Transverse colon (tissue), 4 donors: ENCODE measurements at regions of chr1 and their contacts with region 1.

Region 1: DNA sequence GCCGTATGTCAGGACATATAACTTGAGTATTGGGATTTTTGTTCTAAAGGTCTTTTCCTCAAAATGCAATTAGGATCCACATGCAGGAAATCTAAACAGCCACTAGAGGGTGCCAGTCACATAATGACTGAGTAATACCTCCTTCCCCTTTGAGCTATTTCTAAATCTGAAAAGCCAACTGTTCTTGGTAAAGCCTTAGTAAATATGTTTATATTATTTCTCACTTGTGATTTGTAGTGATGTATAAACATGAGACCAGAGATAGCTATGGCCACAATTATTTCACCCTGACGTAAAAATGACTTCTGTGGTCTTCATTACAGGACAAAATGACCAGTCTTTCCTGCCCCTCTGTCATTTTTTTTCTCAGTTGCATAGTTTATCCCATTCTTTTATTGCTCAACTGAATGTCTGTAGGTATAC is 41.0 kb upstream of the DR1 start:
- DNase-seq: peak; percentile 49
- H3K4me3 ChIP-seq: no peak overlapping the region
- H3K27ac ChIP-seq: no peak overlapping the region
- H3K4me1 ChIP-seq: no peaks in the 10 kb centered on the region
- H3K27me3 ChIP-seq: no peaks in the 10 kb centered on the region
- CTCF ChIP-seq: peak; percentile 81 to 95 (median 84)
- EP300 ChIP-seq: no peak
- POLR2A ChIP-seq: no peak

Region 2: GRCh38 chr1:93196591-93196990 is 108.1 kb before region 1 on chr1:
- in situ Hi-C with region 1: no loop called
- intact Hi-C with region 1: no loop called
- DNase-seq: no peak
- H3K4me3 ChIP-seq: no peak overlapping the region
- H3K27ac ChIP-seq: no peak overlapping the region
- H3K4me1 ChIP-seq: no peaks in the 10 kb centered on the region
- H3K27me3 ChIP-seq: no peaks in the 10 kb centered on the region
- CTCF ChIP-seq: no peak
- EP300 ChIP-seq: no peak
- POLR2A ChIP-seq: no peak

Region 3: DNA sequence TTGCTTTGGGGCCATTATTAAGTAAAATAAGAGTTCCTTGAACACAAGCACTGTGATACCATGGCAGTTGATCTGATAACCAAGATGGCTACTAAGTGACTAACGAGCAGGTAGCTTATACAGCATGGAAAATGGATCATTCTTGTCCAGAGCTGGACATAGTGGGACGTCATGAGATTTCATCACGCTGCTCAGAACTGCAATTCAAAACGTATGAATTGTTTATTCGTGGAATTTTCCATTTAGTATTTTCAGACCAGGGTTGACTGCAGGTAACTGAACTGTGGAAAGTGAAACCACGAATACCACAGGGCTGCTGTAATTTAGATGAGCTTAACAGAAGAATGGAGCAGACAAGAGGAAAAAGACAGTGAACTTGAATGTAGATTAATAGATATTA is 85.3 kb before region 1 on chr1:
- in situ Hi-C with region 1: no loop called
- intact Hi-C with region 1: no loop called
- DNase-seq: no peak
- H3K4me3 ChIP-seq: no peak overlapping the region
- H3K27ac ChIP-seq: no peak overlapping the region
- H3K4me1 ChIP-seq: no peaks in the 10 kb centered on the region
- H3K27me3 ChIP-seq: no peaks in the 10 kb centered on the region
- CTCF ChIP-seq: no peak
- EP300 ChIP-seq: no peak
- POLR2A ChIP-seq: no peak

Region 4: GRCh38 chr1:93414749-93415148 is 110.0 kb after region 1 on chr1:
- in situ Hi-C with region 1: loop called in 1 of 4 experiments (anchors 10 kb)
- intact Hi-C with region 1: no loop called
- DNase-seq: no peak
- H3K4me3 ChIP-seq: no peak overlapping the region
- H3K27ac ChIP-seq: no peak overlapping the region
- H3K4me1 ChIP-seq: no peaks in the 10 kb centered on the region
- H3K27me3 ChIP-seq: no peaks in the 10 kb centered on the region
- CTCF ChIP-seq: no peak
- EP300 ChIP-seq: no peak
- POLR2A ChIP-seq: no peak

Region 5: DNA sequence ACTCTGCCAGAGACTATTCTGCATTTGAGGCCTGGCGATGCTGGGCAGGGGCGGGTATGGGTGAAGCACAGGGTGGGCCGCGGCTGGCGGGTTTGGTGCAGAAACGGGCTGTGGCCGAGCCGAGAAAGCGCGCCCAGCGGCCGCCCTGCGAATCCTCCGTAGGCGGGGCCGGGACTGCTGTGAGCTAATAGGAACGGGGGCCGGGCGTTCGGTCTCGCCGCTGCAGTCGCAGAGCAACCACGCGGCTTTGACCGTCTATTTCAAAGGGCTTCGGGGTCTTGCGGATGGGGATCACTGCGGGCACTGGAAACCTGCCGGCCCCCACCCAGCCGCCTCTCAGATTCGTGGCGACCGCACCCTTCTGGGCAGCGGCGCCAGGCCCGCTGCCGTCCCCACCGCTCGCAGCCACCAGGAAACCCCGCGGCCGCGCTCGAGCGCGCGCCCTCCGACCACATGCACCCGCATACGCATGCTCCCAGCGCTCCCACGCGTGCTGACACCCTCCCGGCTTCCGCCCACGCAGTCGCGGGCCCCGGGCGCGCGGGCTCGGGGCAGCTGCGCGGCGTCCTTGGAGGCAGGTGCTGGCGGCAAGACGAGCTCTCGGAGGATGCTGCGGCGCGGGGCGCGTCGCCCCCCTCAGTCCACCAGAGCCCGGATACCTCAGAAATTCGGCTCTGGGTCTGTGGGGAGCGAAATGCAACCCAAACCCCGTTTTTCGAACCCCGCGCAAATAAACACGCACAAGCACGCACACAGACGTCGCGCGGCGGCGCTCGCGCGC is 541.7 kb after region 1 on chr1:
- in situ Hi-C with region 1: loop called in 1 of 4 experiments (anchors 25 kb)
- intact Hi-C with region 1: no loop called
- DNase-seq: peak; percentile 91
- H3K4me3 ChIP-seq: peak overlapping the region; percentile 54 to 89 (median 80)
- H3K27ac ChIP-seq: peak overlapping the region; percentile 94 to 100 (median 98)
- H3K4me1 ChIP-seq: peaks cover 11 to 30% (median 20%) of the 10 kb centered on the region in 4 donors
- H3K27me3 ChIP-seq: no peaks in the 10 kb centered on the region
- CTCF ChIP-seq: peak; percentile 32 to 66 (median 47)
- EP300 ChIP-seq: no peak
- POLR2A ChIP-seq: peak; percentile 77